ENCODE measurements at regions of chr2 and their contacts with region 1.

Region 1: GRCh38 chr2:233426619-233427342 is 72.5 kb downstream of the DGKD start:
- DNase-seq: peak; percentile 90
- H3K4me3 Mint-ChIP-seq: no peak overlapping the region
- H3K27ac Mint-ChIP-seq: peak overlapping the region; percentile 68
- H3K4me1 Mint-ChIP-seq: peaks cover 81% of the 10 kb centered on the region
- H3K27me3 Mint-ChIP-seq: no peaks in the 10 kb centered on the region

Region 2: DNA sequence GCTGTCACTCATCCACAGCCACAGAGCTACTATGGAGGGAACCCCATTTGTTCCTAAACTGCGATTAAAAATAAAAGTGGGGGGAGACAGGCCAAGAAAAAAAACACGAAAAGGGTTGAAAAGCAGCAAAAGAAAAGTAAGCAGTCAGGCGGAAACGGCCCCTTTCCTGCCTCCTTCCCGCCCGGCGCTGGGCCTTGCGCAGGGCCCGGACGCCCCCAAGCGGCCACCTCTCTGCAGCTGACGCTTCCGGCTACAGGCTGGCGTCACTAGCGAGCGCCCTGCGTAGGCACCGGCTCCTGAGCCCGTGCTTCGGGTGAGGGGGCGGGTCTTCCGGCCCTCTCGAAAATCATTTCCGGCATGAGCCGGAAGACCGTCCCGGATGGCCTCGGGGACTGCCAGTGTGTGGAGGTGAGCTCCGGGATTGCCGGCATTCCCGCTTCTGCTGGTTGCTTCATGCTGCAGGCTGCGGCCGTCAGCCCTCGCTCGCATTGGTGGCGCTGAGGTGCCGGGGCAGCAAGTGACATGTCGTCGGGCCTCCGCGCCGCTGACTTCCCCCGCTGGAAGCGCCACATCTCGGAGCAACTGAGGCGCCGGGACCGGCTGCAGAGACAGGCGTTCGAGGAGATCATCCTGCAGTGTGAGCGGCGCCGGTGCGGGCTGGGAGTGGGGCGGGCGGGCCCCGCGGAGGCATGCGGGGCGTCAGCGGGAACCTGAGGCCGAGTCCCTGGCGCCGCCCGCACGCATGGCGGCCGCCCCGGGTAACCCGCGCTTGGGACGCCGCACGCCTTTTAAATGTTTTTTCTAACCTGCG is 175.3 kb before region 1 on chr2 and contains the start of gene ATG16L1:
- CTCF ChIA-PET with region 1: no interaction called
- POLR2A ChIA-PET with region 1: no interaction called
- intact Hi-C with region 1: no loop called
- DNase-seq: peak; percentile 98
- H3K4me3 Mint-ChIP-seq: peak within 1 kb of the TSS; percentile 91
- H3K27ac Mint-ChIP-seq: peak within 1 kb of the TSS; percentile 96
- H3K4me1 Mint-ChIP-seq: peaks cover 68% of the 10 kb centered on the region
- H3K27me3 Mint-ChIP-seq: no peaks in the 10 kb centered on the region
- total RNA-seq, gene ATG16L1: 27.0 to 30.5 TPM

Region 3: GRCh38 chr2:233303252-233303651 is 123.5 kb before region 1 on chr2:
- CTCF ChIA-PET with region 1: no interaction called
- POLR2A ChIA-PET with region 1: no interaction called
- intact Hi-C with region 1: no loop called
- DNase-seq: no peak
- H3K4me3 Mint-ChIP-seq: no peak overlapping the region
- H3K27ac Mint-ChIP-seq: no peak overlapping the region
- H3K4me1 Mint-ChIP-seq: no peaks in the 10 kb centered on the region
- H3K27me3 Mint-ChIP-seq: no peaks in the 10 kb centered on the region

Region 4: GRCh38 chr2:233413559-233414272 is 13.1 kb before region 1 on chr2:
- CTCF ChIA-PET with region 1: interaction called, 4 read pairs
- POLR2A ChIA-PET with region 1: interaction called, 5 read pairs
- intact Hi-C with region 1: loop called (anchors 1 kb)
- DNase-seq: peak; percentile 74
- H3K4me3 Mint-ChIP-seq: no peak overlapping the region
- H3K27ac Mint-ChIP-seq: peak overlapping the region; percentile 71
- H3K4me1 Mint-ChIP-seq: peaks cover 85% of the 10 kb centered on the region
- H3K27me3 Mint-ChIP-seq: no peaks in the 10 kb centered on the region

Region 5: GRCh38 chr2:233443468-233444183 is 16.8 kb after region 1 on chr2:
- CTCF ChIA-PET with region 1: interaction called, 84 read pairs
- POLR2A ChIA-PET with region 1: interaction called, 4 read pairs
- intact Hi-C with region 1: no loop called
- DNase-seq: peak; percentile 88
- H3K4me3 Mint-ChIP-seq: no peak overlapping the region
- H3K27ac Mint-ChIP-seq: no peak overlapping the region
- H3K4me1 Mint-ChIP-seq: peaks cover 9% of the 10 kb centered on the region
- H3K27me3 Mint-ChIP-seq: no peaks in the 10 kb centered on the region